Naive thymus-derived CD4-positive, alpha-beta T cell (primary cell): ENCODE measurements at regions of chr14 and their contacts with region 1.

Region 1: GRCh38 chr14:99230208-99231151 is 41.5 kb downstream of the BCL11B start:
- DNase-seq: peak; percentile 54 to 91 (median 84)
- ATAC-seq: peak; percentile 82
- H3K4me3 ChIP-seq: peak overlapping the region; percentile 27
- H3K4me3 Mint-ChIP-seq: peak overlapping the region; percentile 79 to 94 (median 86)
- H3K27ac ChIP-seq: peak overlapping the region; percentile 98
- H3K27ac Mint-ChIP-seq: peak overlapping the region; percentile 94 to 100 (median 99)
- H3K4me1 ChIP-seq: peaks cover 94 to 96% of the 10 kb centered on the region in 2 donors
- H3K4me1 Mint-ChIP-seq: peaks cover 65 to 96% (median 92%) of the 10 kb centered on the region in 7 donors
- H3K27me3 ChIP-seq: no peaks in the 10 kb centered on the region
- H3K27me3 Mint-ChIP-seq: no peaks in the 10 kb centered on the region

Region 2: GRCh38 chr14:99168330-99168729 is 62.1 kb before region 1 on chr14:
- CTCF ChIA-PET with region 1: no interaction called
- POLR2A ChIA-PET with region 1: no interaction called
- intact Hi-C with region 1: no loop called
- DNase-seq: no peak
- ATAC-seq: no peak
- H3K4me3 ChIP-seq: no peak overlapping the region
- H3K4me3 Mint-ChIP-seq: peak overlapping the region in 6 of 10 donors; percentile 4 to 58 (median 42)
- H3K27ac ChIP-seq: no peak overlapping the region
- H3K27ac Mint-ChIP-seq: peak overlapping the region; percentile 34 to 93 (median 69)
- H3K4me1 ChIP-seq: no peaks in the 10 kb centered on the region
- H3K4me1 Mint-ChIP-seq: peaks cover 15 to 82% (median 64%) of the 10 kb centered on the region in 7 donors
- H3K27me3 ChIP-seq: no peaks in the 10 kb centered on the region
- H3K27me3 Mint-ChIP-seq: no peaks in the 10 kb centered on the region

Region 3: DNA sequence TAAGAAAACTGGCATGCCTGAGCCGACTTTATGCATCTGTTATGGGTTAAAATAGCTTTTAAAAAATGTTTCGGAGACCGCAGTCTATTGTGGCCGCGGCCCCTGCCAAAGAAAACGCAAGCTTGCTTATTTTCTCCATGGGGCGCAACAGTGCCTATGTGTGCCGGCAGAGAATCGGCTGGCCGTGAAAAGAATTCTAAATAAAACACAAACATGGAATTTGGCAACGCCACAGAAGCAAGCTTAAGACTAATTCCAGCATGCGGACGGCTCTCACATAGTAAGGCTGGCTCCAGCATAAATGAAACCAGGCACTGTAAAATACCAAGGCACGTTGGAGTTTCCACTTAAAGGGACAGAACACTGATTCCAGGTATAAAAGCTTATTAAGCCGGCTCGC is 15.2 kb before region 1 on chr14:
- CTCF ChIA-PET with region 1: interaction called, 14 read pairs
- POLR2A ChIA-PET with region 1: interaction called, 2,458 read pairs
- intact Hi-C with region 1: loop called (anchors 1 to 2 kb)
- DNase-seq: peak in 1 of 9 donors; percentile 22
- ATAC-seq: no peak
- H3K4me3 ChIP-seq: peak overlapping the region; percentile 40
- H3K4me3 Mint-ChIP-seq: peak overlapping the region; percentile 79 to 94 (median 88)
- H3K27ac ChIP-seq: peak overlapping the region; percentile 64
- H3K27ac Mint-ChIP-seq: peak overlapping the region; percentile 86 to 100 (median 98)
- H3K4me1 ChIP-seq: peaks cover 82 to 94% of the 10 kb centered on the region in 2 donors
- H3K4me1 Mint-ChIP-seq: peaks cover 73 to 100% (median 93%) of the 10 kb centered on the region in 7 donors
- H3K27me3 ChIP-seq: no peaks in the 10 kb centered on the region
- H3K27me3 Mint-ChIP-seq: no peaks in the 10 kb centered on the region